Ovary (tissue), 10 donors: ENCODE measurements at regions of chr4 and their contacts with region 1.

Region 1: GRCh38 chr4:127732613-127733328 is 2.6 kb downstream of the SLC25A31 start:
- DNase-seq: no peak
- H3K4me3 ChIP-seq: no peak overlapping the region
- H3K27ac ChIP-seq: no peak overlapping the region
- H3K4me1 ChIP-seq: no peaks in the 10 kb centered on the region
- H3K27me3 ChIP-seq: no peaks in the 10 kb centered on the region
- CTCF ChIP-seq: peak in 1 of 3 donors; percentile 16
- EP300 ChIP-seq: no peak
- POLR2A ChIP-seq: no peak

Region 2: DNA sequence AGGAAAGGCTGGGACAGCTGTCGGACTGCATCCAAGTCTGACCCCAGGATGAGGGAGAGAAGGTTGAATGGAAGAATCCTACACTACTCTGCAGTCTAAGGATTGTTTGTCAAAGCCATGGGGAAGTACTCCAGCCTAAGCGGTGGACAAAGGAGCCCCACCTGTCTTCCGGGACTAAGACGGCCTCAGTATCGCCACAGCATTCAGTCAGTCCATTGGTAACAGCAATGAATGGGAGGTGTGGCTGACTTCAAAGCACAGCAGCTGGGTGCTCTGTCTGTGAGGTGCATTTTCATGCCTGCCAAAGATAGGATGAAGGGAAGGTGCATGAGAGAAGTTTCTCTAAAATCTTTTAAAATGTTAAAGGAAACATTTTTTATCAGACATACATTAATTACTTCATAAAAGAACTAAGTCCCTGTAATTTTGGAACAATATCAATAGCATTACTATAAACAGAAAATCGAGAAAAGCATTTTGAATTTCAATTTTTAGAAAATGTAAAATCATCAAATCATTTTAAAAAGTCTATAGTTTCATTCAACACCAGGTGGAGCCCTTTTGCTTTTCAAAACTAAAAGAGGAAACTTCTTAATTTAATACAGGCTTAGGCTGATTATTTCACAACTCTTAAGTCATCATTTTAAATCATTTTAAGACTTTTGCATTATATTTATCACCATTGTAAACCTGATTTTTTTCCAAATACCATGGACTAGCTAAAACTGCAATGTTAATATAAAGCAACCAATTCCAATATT is 127.6 kb before region 1 on chr4:
- intact Hi-C with region 1: loop called (anchors 5 kb)
- DNase-seq: no peak
- H3K4me3 ChIP-seq: no peak overlapping the region
- H3K27ac ChIP-seq: no peak overlapping the region
- H3K4me1 ChIP-seq: no peaks in the 10 kb centered on the region
- H3K27me3 ChIP-seq: no peaks in the 10 kb centered on the region
- CTCF ChIP-seq: peak in 2 of 3 donors; percentile 9 to 14
- EP300 ChIP-seq: no peak
- POLR2A ChIP-seq: no peak

Region 3: GRCh38 chr4:127610488-127610887 is 122.3 kb before region 1 on chr4:
- intact Hi-C with region 1: loop called (anchors 5 kb)
- DNase-seq: no peak
- H3K4me3 ChIP-seq: no peak overlapping the region
- H3K27ac ChIP-seq: no peak overlapping the region
- H3K4me1 ChIP-seq: no peaks in the 10 kb centered on the region
- H3K27me3 ChIP-seq: no peaks in the 10 kb centered on the region
- CTCF ChIP-seq: no peak
- EP300 ChIP-seq: no peak
- POLR2A ChIP-seq: no peak